Activated CD8-positive, alpha-beta T cell treated with anti-CD3 and anti-CD28 coated beads, Interleukin-2, amount 10 ng/mL, durations not matched to agents 7 days and 5 days (primary cell): ENCODE measurements at regions of chr12 and their contacts with region 1.

Region 1: DNA sequence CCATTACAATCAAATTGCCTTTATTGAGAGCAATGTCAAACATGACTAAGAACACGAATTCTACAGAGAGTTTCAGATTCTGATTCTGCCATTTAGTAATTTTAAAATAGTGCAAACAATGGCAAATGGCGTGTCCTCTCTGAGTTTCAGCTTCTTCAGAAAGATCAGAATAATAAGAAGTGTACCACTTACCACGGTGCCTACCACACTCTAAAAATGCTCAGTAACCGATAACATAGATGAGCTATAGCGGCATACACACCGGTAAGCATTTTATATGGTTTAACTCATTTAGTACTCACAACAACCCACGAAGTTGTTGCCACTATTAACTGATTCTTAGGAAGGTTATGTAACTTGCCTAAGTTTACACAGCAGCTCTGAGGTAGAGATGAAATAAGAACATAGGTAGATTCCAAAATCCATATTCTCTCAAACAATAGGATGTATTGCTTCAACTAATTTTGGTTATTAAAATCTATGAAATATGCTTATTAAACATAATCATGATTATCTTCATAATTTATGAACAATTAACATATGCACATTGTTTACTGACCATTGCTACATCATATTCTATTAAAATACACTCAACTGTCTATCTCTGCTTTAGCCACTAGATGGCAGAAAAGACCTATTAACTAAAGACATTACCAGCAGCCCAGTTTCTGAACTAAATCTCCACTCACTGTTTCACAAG is 38.3 kb downstream of the SLC6A15 start:
- DNase-seq: no peak
- ATAC-seq: peak; percentile 53
- H3K4me3 Mint-ChIP-seq: no peak overlapping the region
- H3K27ac Mint-ChIP-seq: no peak overlapping the region
- H3K4me1 Mint-ChIP-seq: no peaks in the 10 kb centered on the region
- H3K27me3 Mint-ChIP-seq: no peaks in the 10 kb centered on the region

Region 2: DNA sequence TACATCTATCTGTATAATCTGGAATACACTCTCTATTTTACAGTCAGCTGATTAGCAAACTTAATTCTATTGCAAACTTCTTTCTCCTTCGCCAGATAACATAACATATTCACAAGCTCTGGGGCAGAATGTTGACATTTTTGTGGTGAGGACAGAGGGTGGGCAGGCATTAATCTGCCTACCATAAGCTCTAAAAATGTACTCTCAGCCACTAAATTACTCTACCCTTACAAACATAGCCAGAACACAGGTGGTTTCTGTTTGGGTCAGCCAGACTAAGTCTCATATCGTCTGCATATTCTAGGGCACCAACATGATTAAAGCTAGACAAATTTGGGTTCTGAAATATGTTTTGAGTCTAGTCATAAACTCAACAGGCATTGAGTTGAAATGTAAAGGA is 51.8 kb before region 1 on chr12:
- CTCF ChIA-PET with region 1: no interaction called
- POLR2A ChIA-PET with region 1: no interaction called
- DNase-seq: no peak
- ATAC-seq: no peak
- H3K4me3 Mint-ChIP-seq: no peak overlapping the region
- H3K27ac Mint-ChIP-seq: no peak overlapping the region
- H3K4me1 Mint-ChIP-seq: no peaks in the 10 kb centered on the region
- H3K27me3 Mint-ChIP-seq: no peaks in the 10 kb centered on the region

Region 3: GRCh38 chr12:84946753-84947152 is 72.5 kb after region 1 on chr12:
- CTCF ChIA-PET with region 1: no interaction called
- POLR2A ChIA-PET with region 1: no interaction called
- DNase-seq: no peak
- ATAC-seq: no peak
- H3K4me3 Mint-ChIP-seq: no peak overlapping the region
- H3K27ac Mint-ChIP-seq: no peak overlapping the region
- H3K4me1 Mint-ChIP-seq: no peaks in the 10 kb centered on the region
- H3K27me3 Mint-ChIP-seq: no peaks in the 10 kb centered on the region

Region 4: DNA sequence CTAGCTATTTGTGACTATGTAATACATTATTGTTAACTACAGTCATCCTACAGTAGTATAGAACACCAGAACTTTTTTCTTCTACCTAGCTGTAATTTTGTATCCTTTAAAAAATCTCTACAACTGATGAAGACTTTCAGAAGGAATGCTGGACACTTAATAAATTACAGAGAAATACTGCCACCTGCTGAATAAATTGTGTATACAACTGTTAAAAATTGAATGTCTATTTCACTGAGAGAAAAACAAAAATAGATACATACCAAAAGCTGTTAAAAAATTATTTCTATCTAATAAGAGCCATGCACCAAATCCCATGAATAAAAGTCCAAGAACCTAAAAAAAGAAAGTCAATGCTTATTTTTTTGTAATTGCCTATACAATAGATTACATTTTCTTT is 155.2 kb after region 1 on chr12:
- CTCF ChIA-PET with region 1: interaction called, 71 read pairs
- POLR2A ChIA-PET with region 1: no interaction called
- DNase-seq: no peak
- ATAC-seq: no peak
- H3K4me3 Mint-ChIP-seq: no peak overlapping the region
- H3K27ac Mint-ChIP-seq: no peak overlapping the region
- H3K4me1 Mint-ChIP-seq: no peaks in the 10 kb centered on the region
- H3K27me3 Mint-ChIP-seq: no peaks in the 10 kb centered on the region